Heart right ventricle (tissue), 16 donors: ENCODE measurements at regions of chr11 and their contacts with region 1.

Region 1: GRCh38 chr11:40314327-40314726 is 1145.1 kb downstream of the LRRC4C start:
- DNase-seq: no peak
- ATAC-seq: no peak
- H3K4me3 ChIP-seq: no peak overlapping the region
- H3K27ac ChIP-seq: no peak overlapping the region
- H3K4me1 ChIP-seq: no peaks in the 10 kb centered on the region
- H3K27me3 ChIP-seq: no peaks in the 10 kb centered on the region
- CTCF ChIP-seq: no peak

Region 2: GRCh38 chr11:40252236-40252635 is 62.1 kb before region 1 on chr11:
- intact Hi-C with region 1: loop called in 1 of 10 experiments (anchors 10 kb)
- DNase-seq: no peak
- ATAC-seq: no peak
- H3K4me3 ChIP-seq: no peak overlapping the region
- H3K27ac ChIP-seq: no peak overlapping the region
- H3K4me1 ChIP-seq: no peaks in the 10 kb centered on the region
- H3K27me3 ChIP-seq: no peaks in the 10 kb centered on the region
- CTCF ChIP-seq: no peak